Psoas muscle (tissue), 8 donors: ENCODE measurements at regions of chr10 and their contacts with region 1.

Region 1: GRCh38 chr10:73855413-73855812 is 18.9 kb downstream of the CAMK2G start:
- DNase-seq: no peak
- ATAC-seq: no peak
- H3K4me3 ChIP-seq: no peak overlapping the region
- H3K27ac ChIP-seq: no peak overlapping the region
- H3K4me1 ChIP-seq: peaks cover 54% of the 10 kb centered on the region
- H3K27me3 ChIP-seq: no peaks in the 10 kb centered on the region
- CTCF ChIP-seq: no peak

Region 2: GRCh38 chr10:73871915-73872710 is 16.7 kb after region 1 on chr10:
- intact Hi-C with region 1: loop called in 1 of 2 experiments (anchors 2 kb)
- DNase-seq: no peak
- ATAC-seq: no peak
- H3K4me3 ChIP-seq: peak overlapping the region; percentile 83
- H3K27ac ChIP-seq: peak overlapping the region; percentile 26
- H3K4me1 ChIP-seq: peaks cover 84% of the 10 kb centered on the region
- H3K27me3 ChIP-seq: no peaks in the 10 kb centered on the region
- CTCF ChIP-seq: peak; percentile 4